Activated CD4-positive, alpha-beta memory T cell treated with anti-CD3 and anti-CD28 coated beads for 36 hours (primary cell): ENCODE measurements at regions of chr2 and their contacts with region 1.

Region 1: DNA sequence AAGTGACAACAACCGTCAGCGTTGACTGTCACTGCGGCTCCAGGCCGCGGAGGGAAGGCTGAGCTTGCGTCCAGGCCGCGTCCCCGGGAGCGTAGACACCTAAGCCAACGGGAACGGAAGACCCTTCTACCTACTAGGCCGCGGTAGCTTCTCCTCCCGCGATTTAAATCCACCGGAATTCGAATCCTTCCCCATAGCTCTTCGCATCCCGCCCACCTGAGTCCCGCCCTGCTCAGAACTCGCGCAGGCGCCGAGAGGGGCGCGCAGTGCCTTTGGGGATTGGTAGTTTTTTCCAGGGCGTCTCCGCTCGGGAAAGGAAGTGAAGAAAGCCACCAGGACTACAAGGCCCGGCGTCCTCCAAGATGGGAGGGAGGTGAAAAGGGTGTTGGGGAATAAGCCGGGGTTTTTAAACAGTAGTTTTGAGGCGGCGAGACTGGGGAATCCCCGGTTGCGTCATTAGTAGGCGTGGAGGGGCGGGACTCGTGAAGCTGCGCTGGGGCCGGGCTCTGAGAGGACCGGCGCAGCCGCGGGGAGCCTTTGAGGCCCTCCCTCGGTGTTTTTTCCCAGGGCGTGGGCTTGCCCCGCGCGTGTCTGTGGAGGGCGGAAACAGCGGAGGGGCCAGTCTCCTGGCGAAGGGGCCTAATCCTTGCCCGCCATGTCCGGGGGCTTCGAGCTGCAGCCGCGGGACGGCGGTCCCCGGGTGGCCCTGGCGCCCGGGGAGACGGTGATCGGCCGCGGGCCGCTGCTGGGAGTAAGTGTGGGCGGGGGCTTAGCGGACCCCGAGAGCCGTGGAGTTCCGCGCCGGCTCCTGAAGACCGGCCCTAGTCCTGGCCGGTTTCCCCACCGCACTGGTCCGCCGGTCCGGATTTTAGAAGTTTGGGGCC is at the starts of genes APLF and FBXO48:
- DNase-seq: peak; percentile 99
- H3K4me3 Mint-ChIP-seq: peak within 1 kb of the TSS; percentile 97
- H3K27ac Mint-ChIP-seq: peak within 1 kb of the TSS; percentile 94
- H3K4me1 Mint-ChIP-seq: peaks cover 44% of the 10 kb centered on the region
- H3K27me3 Mint-ChIP-seq: no peaks in the 10 kb centered on the region
- total RNA-seq, gene APLF: 3.0 to 3.1 TPM
- total RNA-seq, gene FBXO48: 2.3 to 2.6 TPM

Region 2: GRCh38 chr2:68352651-68353391 is 114.5 kb before region 1 on chr2:
- CTCF ChIA-PET with region 1: no interaction called
- POLR2A ChIA-PET with region 1: no interaction called
- intact Hi-C with region 1: no loop called
- DNase-seq: no peak
- H3K4me3 Mint-ChIP-seq: no peak overlapping the region
- H3K27ac Mint-ChIP-seq: no peak overlapping the region
- H3K4me1 Mint-ChIP-seq: no peaks in the 10 kb centered on the region
- H3K27me3 Mint-ChIP-seq: peaks cover 8% of the 10 kb centered on the region

Region 3: GRCh38 chr2:68385220-68385906 is 82.0 kb before region 1 on chr2:
- CTCF ChIA-PET with region 1: no interaction called
- POLR2A ChIA-PET with region 1: no interaction called
- intact Hi-C with region 1: loop called (anchors 1 kb)
- DNase-seq: peak; percentile 62
- H3K4me3 Mint-ChIP-seq: no peak overlapping the region
- H3K27ac Mint-ChIP-seq: no peak overlapping the region
- H3K4me1 Mint-ChIP-seq: peaks cover 41% of the 10 kb centered on the region
- H3K27me3 Mint-ChIP-seq: no peaks in the 10 kb centered on the region

Region 4: GRCh38 chr2:68516051-68516955 is 49.0 kb after region 1 on chr2:
- CTCF ChIA-PET with region 1: interaction called, 7 read pairs
- POLR2A ChIA-PET with region 1: no interaction called
- intact Hi-C with region 1: loop called (anchors 2 kb)
- DNase-seq: no peak
- H3K4me3 Mint-ChIP-seq: no peak overlapping the region
- H3K27ac Mint-ChIP-seq: no peak overlapping the region
- H3K4me1 Mint-ChIP-seq: peaks cover 8% of the 10 kb centered on the region
- H3K27me3 Mint-ChIP-seq: no peaks in the 10 kb centered on the region

Region 5: DNA sequence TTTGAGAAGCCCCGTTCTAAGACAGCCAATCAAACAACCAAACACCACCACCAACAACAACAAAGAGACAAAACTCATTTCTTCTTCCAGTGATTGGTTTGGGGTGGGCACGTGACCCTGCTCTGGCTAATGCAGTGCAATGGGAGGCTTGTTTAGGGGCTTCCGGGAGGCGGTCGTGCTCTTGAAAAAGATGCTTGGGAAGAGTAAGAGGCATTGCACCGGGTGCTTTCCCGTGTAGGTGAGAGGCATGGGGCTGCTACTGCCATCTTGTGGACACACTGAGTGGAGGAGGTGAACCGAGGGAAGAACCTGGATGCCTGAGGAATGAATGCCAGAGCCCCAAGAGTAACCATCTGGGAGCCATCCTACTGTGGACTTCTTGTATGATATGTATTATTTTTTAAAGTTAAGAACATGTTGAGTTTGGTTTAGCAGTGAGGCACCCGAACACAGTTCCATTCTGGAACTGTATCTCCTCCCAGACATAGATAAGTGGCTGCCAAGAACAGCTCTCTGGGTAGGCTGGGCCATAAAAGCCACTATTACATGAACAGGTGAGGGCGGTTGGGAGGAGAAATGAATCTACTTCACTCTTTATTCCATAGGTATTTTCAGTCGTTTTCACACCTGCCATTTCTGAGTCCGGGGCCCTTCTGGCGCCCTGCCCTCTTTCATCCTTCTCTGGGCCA is 248.2 kb after region 1 on chr2:
- CTCF ChIA-PET with region 1: interaction called, 44 read pairs
- POLR2A ChIA-PET with region 1: interaction called, 4 read pairs
- intact Hi-C with region 1: loop called (anchors 1 kb)
- DNase-seq: peak; percentile 77
- H3K4me3 Mint-ChIP-seq: peak overlapping the region; percentile 8
- H3K27ac Mint-ChIP-seq: peak overlapping the region; percentile 80
- H3K4me1 Mint-ChIP-seq: peaks cover 81% of the 10 kb centered on the region
- H3K27me3 Mint-ChIP-seq: no peaks in the 10 kb centered on the region

Region 6: GRCh38 chr2:68751397-68752339 is 284.3 kb after region 1 on chr2:
- CTCF ChIA-PET with region 1: interaction called, 15 read pairs
- POLR2A ChIA-PET with region 1: no interaction called
- intact Hi-C with region 1: no loop called
- DNase-seq: peak; percentile 95
- H3K4me3 Mint-ChIP-seq: peak overlapping the region; percentile 30
- H3K27ac Mint-ChIP-seq: peak overlapping the region; percentile 79
- H3K4me1 Mint-ChIP-seq: peaks cover 85% of the 10 kb centered on the region
- H3K27me3 Mint-ChIP-seq: no peaks in the 10 kb centered on the region

Region 7: GRCh38 chr2:68925295-68925896 is 458.1 kb after region 1 on chr2:
- CTCF ChIA-PET with region 1: interaction called, 127 read pairs
- POLR2A ChIA-PET with region 1: no interaction called
- intact Hi-C with region 1: loop called (anchors 2 kb)
- DNase-seq: peak; percentile 57
- H3K4me3 Mint-ChIP-seq: no peak overlapping the region
- H3K27ac Mint-ChIP-seq: no peak overlapping the region
- H3K4me1 Mint-ChIP-seq: peaks cover 6% of the 10 kb centered on the region
- H3K27me3 Mint-ChIP-seq: no peaks in the 10 kb centered on the region